ENCODE measurements at regions of chr9 and their contacts with region 1.

Region 1: DNA sequence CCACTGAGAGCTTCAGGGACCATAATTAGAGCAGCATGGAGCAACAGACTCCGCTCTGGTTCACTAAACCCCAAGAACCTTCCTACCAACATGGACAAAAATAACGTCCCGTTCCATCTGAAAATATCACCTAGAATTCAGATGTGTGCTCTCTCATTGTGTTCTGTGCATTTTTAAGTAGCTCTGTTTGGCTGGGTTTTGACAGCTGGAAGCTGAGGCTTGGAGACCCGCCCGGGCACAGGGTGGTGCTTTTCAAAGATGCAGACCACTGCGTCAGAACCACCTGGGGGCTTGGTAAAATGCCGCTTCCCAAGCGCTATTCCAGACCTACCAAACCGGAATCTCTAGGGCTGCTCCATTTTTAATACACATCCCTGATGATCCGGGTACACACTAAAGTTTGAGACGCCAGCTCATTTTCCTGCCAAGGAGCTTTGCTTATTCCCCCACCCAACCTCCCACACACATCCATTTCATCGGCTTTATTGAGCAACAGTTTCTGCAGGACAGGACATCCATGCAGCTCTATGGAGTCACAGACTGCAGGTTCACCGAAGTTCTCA is 104.8 kb downstream of the GABBR2 start:
- DNase-seq: no peak
- H3K4me3 ChIP-seq: no peak overlapping the region
- H3K27ac ChIP-seq: no peak overlapping the region
- H3K4me1 ChIP-seq: no peaks in the 10 kb centered on the region
- H3K27me3 ChIP-seq: no peaks in the 10 kb centered on the region
- CTCF ChIP-seq: no peak
- EP300 ChIP-seq: no peak
- POLR2A ChIP-seq: no peak

Region 2: GRCh38 chr9:97689401-97689800 is 914.5 kb before region 1 on chr9:
- intact Hi-C with region 1: loop called in 1 of 4 experiments (anchors 5 kb)
- DNase-seq: no peak
- H3K4me3 ChIP-seq: no peak overlapping the region
- H3K27ac ChIP-seq: no peak overlapping the region
- H3K4me1 ChIP-seq: peaks cover 2% of the 10 kb centered on the region
- H3K27me3 ChIP-seq: no peaks in the 10 kb centered on the region
- CTCF ChIP-seq: no peak
- EP300 ChIP-seq: no peak
- POLR2A ChIP-seq: no peak

Region 3: DNA sequence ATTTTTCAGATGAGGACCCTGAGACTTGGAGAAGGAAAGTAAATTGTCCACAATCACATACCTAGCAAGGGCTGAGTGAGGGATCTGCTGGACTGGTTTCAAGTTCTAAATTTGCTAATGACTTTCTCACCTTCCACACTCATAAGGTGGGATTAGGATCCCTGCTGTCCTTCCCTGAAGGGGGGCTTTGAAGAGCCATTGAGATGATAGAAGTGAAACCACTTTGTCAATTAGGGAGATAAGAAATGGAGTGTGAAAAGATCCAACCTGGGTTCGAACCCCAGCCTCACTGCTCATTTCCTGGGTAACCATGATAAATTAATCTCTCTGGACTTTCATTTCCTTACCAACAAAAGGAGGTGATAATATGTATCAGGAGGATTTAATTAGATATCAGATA is 783.5 kb before region 1 on chr9:
- intact Hi-C with region 1: no loop called
- DNase-seq: no peak
- H3K4me3 ChIP-seq: no peak overlapping the region
- H3K27ac ChIP-seq: no peak overlapping the region
- H3K4me1 ChIP-seq: no peaks in the 10 kb centered on the region
- H3K27me3 ChIP-seq: no peaks in the 10 kb centered on the region
- CTCF ChIP-seq: no peak
- EP300 ChIP-seq: no peak
- POLR2A ChIP-seq: no peak

Region 4: GRCh38 chr9:98538626-98539031 is 65.3 kb before region 1 on chr9:
- intact Hi-C with region 1: no loop called
- DNase-seq: no peak
- H3K4me3 ChIP-seq: no peak overlapping the region
- H3K27ac ChIP-seq: no peak overlapping the region
- H3K4me1 ChIP-seq: no peaks in the 10 kb centered on the region
- H3K27me3 ChIP-seq: no peaks in the 10 kb centered on the region
- CTCF ChIP-seq: no peak
- EP300 ChIP-seq: no peak
- POLR2A ChIP-seq: no peak

Region 5: DNA sequence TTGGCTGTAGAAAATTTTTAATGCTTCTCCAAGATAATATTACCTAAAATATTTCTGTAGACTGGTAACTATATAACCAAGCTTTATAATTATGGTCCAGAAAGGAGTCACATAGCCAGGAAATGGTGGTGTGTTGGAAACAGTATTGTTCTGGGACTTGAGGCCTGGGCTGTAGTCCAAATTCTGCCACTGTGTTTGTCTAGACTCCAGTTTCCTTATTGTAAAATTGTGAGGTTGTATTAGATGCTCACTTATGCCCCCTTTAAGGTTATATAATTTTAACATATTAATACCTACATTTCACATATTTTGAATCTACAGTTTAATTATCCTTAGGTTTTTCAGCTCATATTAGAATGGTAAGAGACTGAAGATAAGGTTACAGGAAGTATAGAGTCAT is 1345.0 kb after region 1 on chr9:
- intact Hi-C with region 1: no loop called
- DNase-seq: no peak
- H3K4me3 ChIP-seq: no peak overlapping the region
- H3K27ac ChIP-seq: no peak overlapping the region
- H3K4me1 ChIP-seq: no peaks in the 10 kb centered on the region
- H3K27me3 ChIP-seq: no peaks in the 10 kb centered on the region
- CTCF ChIP-seq: no peak
- EP300 ChIP-seq: no peak
- POLR2A ChIP-seq: no peak